GM10248 (cell line): ENCODE measurements at regions of chr16 and their contacts with region 1.

Region 1: DNA sequence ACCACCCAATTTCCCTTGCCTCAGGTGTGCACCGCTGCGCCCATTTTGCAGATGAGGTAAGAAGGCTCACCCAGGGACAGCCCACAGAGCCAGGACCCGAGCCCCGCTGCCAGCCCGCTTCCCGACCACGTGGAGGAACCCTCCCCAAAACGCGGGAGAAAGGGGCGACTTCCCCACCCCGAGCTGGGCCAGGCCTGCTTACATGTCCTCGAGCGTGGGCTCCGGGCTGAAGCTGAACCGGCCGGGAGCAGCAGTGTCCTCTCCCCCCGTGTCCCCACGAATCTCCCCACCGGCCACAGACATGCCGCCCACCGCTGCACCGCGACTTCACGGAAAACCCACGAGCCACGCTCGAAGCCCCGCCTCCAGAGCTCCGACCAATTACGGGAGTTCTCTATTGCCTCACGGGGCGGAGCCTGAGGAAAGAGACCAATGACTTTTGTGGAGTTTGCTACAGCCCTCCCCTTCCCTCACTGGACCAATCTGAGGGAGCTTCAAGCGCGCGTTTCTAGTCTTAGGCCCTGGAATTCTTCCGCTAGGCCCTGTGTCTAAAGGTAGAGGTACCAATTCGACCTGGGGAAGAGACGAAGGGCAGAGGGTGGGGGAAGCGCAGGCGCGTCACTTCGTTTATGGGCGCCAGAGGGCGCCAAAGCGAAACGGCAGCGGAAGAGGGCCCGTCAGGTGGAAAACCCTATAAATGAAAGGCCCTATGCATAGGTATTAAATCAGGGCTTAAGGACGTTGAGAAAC is at the start of gene DCTPP1:
- DNase-seq: peak; percentile 95
- CTCF ChIP-seq: peak; percentile 90

Region 2: DNA sequence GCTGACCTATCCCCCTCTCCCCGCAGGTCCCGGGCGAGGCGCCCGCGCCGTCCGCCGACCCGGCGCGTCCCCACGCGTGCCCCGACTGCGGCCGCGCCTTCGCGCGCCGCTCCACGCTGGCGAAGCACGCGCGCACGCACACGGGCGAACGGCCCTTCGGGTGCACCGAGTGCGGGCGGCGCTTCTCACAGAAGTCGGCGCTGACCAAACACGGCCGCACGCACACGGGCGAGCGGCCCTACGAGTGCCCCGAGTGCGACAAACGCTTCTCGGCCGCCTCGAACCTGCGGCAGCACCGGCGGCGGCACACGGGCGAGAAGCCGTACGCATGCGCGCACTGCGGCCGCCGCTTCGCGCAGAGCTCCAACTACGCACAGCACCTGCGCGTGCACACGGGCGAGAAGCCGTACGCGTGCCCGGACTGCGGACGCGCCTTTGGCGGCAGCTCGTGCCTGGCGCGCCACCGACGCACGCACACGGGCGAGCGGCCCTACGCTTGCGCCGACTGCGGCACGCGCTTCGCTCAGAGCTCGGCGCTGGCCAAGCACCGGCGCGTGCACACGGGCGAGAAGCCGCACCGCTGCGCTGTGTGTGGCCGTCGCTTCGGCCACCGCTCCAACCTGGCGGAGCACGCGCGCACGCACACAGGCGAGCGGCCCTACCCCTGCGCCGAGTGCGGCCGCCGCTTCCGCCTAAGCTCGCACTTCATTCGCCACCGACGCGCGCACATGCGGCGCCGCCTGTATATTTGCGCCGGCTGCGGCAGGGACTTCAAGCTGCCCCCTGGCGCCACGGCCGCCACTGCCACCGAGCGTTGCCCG is 12.1 kb before region 1 on chr16:
- CTCF ChIA-PET with region 1: interaction called, 21 read pairs
- POLR2A ChIA-PET with region 1: interaction called, 8 read pairs
- DNase-seq: peak; percentile 79
- CTCF ChIP-seq: peak; percentile 33

Region 3: GRCh38 chr16:30472328-30472942 is 42.6 kb after region 1 on chr16 and contains the start of gene ITGAL:
- CTCF ChIA-PET with region 1: interaction called, 10 read pairs
- POLR2A ChIA-PET with region 1: no interaction called
- DNase-seq: peak; percentile 70
- CTCF ChIP-seq: no peak

Region 4: DNA sequence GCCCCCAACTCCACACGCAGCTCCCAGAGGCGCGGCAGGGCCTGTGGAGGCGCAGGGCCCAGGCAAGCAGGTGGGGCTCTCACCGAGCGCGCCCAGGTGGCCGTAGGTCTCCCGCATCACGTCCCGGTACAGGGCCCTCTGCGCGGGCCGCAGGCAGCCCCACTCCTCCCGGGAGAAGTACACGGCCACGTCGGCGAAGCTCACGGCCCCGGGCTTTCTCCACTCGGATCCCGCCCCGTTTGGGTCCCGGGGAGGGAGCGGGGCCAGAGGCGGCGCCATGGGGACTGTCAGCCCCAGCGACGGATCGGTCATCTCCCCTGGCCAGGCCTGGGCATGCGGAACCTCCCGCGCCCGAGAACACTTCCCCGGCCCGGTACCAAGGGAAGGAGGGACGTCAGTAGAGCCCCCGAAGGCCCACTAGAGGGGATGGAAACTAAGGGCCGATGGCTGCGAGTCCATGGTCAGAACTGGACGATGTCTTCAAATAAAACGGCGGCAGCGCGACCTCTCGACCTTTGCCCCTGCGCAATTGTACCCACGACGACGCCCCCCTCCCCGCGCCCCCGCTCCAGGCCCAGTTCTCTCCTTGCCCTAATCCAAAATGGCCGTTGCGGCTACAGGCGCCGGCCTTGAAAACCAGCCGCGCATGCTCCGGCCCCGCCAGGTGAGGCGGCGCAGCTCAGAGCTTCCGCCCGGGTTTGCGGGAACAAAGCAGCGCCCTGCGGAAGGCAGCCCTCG is 104.7 kb after region 1 on chr16 and contains the start of gene ZNF747:
- CTCF ChIA-PET with region 1: interaction called, 47 read pairs
- POLR2A ChIA-PET with region 1: interaction called, 6 read pairs
- DNase-seq: peak; percentile 92
- CTCF ChIP-seq: peak; percentile 11

Region 5: GRCh38 chr16:30609926-30610839 is 180.3 kb after region 1 on chr16 and contains the start of gene ZNF689:
- CTCF ChIA-PET with region 1: interaction called, 45 read pairs
- POLR2A ChIA-PET with region 1: interaction called, 5 read pairs
- DNase-seq: peak; percentile 97
- CTCF ChIP-seq: no peak

Region 6: DNA sequence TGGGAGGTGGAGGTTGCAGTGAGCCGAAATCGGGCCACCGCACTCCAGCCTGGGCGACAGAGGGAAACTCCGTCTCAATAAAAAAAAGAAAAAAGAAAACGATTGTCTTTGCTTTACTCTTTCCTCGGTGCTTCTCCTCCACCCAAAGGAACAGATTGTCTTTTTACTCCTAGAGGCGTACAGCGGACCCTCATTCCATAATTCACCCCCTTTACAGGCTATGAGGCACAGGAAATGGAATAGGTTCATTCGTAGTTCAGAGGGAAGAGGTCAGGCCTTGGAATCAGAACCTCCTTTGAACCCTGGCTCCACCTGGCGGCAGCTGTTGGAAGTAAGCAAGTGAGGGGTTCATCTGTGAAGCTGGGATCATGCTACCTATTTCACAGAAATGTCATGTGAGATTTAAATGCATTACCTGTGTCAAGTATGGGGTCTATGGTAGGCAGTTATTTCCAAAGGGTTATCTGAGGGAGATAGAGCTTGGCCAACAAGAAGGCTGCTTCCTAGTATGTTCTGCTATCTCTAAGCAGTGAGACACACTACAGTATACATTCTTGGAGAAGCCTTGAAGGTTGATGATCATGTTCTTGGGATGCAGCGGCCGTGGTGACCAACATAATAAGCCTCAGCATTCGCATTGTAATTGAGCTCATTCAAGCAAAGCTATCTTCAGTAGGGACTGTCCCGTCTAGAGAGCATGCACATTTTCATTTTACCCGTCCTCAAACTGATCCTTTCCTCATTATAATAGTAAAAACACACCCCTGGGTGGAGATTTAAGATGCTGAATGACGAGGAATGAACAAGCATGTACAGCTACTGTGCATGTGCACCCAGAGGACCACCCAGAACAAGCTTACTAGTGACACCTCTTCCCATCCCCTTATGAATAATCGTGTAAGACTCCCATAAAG is 199.0 kb after region 1 on chr16:
- CTCF ChIA-PET with region 1: interaction called, 28 read pairs
- POLR2A ChIA-PET with region 1: no interaction called
- DNase-seq: peak; percentile 73
- CTCF ChIP-seq: peak; percentile 81